ENCODE measurements at regions of chrX and their contacts with region 1.

Region 1: DNA sequence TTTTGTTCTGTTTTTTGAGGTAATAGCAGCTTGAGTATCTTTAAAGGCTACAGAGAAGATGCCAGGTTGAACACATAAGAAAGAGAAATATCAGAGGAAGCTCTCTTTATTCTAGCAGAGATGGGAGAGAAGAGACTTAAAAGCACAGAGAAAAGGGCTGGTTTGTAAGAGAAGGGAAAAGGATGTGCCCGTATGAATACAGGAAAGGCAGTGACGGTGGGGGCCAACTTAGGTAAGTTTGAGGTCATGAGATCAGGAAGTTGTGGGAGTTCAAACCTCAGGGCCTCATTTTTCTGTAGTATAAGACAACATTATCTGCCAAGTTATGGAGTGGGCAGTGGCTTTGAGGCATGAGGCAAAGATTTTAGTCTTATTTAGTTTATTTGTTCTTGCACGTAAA is 121.3 kb upstream of the S100G start:
- DNase-seq: peak; percentile 69
- ATAC-seq: peak; percentile 87
- H3K4me3 Mint-ChIP-seq: peak overlapping the region; percentile 44
- H3K27ac Mint-ChIP-seq: peak overlapping the region; percentile 92
- H3K4me1 Mint-ChIP-seq: peaks cover 37% of the 10 kb centered on the region
- H3K27me3 Mint-ChIP-seq: no peaks in the 10 kb centered on the region
- CTCF ChIP-seq: no peak

Region 2: GRCh38 chrX:16479206-16479869 is 49.3 kb before region 1 on chrX:
- CTCF ChIA-PET with region 1: no interaction called
- POLR2A ChIA-PET with region 1: no interaction called
- intact Hi-C with region 1: loop called (anchors 10 kb)
- DNase-seq: no peak
- ATAC-seq: peak; percentile 65
- H3K4me3 Mint-ChIP-seq: no peak overlapping the region
- H3K27ac Mint-ChIP-seq: no peak overlapping the region
- H3K4me1 Mint-ChIP-seq: peaks cover 17% of the 10 kb centered on the region
- H3K27me3 Mint-ChIP-seq: no peaks in the 10 kb centered on the region
- CTCF ChIP-seq: no peak

Region 3: DNA sequence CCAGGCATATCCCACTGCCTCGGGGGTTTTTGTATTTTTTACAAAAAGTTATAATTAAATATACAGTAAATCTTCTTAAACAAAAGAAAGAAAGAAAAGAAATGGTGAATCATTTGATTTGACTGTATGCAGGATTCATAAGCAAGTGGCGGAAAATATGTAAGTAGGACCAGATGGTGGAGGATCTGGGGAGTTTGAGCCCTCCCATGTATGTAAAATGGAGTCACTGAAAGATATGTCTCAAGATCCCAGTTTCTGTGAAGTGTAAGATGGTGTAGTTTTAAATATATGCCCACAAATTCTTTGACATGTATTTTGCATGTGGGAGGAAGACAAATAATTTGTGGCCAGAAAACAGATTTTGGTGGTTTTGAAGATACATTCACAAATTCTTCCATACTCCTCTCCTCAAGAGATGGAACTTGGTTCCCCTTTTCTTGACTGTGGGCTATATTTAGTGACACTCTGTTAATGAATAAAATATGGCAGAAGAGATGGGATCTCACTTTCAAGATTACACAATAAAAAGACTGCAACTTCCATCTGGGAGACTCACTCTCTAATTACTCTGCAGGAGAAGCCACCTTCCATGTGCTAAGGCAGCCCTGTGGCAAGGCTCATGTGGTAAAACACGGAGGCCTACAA is 12.3 kb before region 1 on chrX:
- CTCF ChIA-PET with region 1: no interaction called
- POLR2A ChIA-PET with region 1: no interaction called
- intact Hi-C with region 1: no loop called
- DNase-seq: no peak
- ATAC-seq: no peak
- H3K4me3 Mint-ChIP-seq: no peak overlapping the region
- H3K27ac Mint-ChIP-seq: no peak overlapping the region
- H3K4me1 Mint-ChIP-seq: peaks cover 5% of the 10 kb centered on the region
- H3K27me3 Mint-ChIP-seq: no peaks in the 10 kb centered on the region
- CTCF ChIP-seq: no peak

Measured in activated CD8-positive, alpha-beta T cell treated with anti-CD3 and anti-CD28 coated beads for 36 hours (primary cell).